ENCODE measurements at regions of chr17 and their contacts with region 1.

Region 1: DNA sequence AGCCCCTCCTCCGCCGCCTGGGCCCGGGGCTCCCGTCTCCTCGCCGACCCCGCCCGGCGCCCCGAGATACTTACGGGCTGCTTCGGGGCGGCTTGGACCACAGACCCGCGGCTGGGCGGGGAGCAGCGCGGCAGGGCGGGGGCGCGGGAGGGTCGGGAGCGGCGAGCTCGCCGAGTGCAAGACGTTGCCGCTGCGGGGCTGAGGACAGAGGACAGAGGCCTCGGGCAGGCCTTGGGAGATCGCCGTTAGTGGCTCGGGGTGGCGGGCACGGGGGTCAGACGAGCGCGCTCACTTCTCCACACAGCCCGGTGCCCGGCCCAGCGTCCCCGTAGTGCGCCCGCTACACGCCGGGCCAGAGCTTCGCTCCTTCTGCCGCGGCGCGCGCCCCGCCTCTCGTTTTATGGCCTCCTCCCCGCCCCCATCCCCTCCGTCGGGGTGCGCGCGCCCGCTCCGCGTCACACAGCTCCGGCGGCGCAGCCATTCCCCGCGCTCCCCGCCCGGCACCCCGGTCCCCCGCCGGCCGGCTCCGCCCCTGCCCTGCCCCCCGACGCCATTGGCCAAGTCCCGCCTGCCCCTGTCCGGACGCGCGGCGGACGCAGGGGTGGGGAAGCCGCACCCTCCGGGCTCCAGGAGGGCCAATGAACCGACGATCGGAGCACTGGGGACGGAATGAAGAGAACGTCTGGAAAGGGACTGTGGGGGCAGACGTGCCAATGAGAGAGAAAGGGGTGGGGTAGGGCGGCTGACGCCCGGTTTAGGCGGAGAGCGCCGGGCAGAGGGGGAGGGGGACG is at the start of gene TOB1:
- DNase-seq: peak; percentile 99
- H3K4me3 ChIP-seq: peak within 1 kb of the TSS; percentile 90 to 100 (median 95)
- H3K27ac ChIP-seq: peak within 1 kb of the TSS; percentile 98 to 100 (median 99)
- H3K4me1 ChIP-seq: peaks cover 3 to 52% (median 34%) of the 10 kb centered on the region in 4 donors
- H3K27me3 ChIP-seq: no peaks in the 10 kb centered on the region
- CTCF ChIP-seq: no peak
- EP300 ChIP-seq: no peak
- POLR2A ChIP-seq: peak; percentile 99
- total RNA-seq, gene TOB1: 69.1 to 88.3 (median 75.5) TPM

Region 2: DNA sequence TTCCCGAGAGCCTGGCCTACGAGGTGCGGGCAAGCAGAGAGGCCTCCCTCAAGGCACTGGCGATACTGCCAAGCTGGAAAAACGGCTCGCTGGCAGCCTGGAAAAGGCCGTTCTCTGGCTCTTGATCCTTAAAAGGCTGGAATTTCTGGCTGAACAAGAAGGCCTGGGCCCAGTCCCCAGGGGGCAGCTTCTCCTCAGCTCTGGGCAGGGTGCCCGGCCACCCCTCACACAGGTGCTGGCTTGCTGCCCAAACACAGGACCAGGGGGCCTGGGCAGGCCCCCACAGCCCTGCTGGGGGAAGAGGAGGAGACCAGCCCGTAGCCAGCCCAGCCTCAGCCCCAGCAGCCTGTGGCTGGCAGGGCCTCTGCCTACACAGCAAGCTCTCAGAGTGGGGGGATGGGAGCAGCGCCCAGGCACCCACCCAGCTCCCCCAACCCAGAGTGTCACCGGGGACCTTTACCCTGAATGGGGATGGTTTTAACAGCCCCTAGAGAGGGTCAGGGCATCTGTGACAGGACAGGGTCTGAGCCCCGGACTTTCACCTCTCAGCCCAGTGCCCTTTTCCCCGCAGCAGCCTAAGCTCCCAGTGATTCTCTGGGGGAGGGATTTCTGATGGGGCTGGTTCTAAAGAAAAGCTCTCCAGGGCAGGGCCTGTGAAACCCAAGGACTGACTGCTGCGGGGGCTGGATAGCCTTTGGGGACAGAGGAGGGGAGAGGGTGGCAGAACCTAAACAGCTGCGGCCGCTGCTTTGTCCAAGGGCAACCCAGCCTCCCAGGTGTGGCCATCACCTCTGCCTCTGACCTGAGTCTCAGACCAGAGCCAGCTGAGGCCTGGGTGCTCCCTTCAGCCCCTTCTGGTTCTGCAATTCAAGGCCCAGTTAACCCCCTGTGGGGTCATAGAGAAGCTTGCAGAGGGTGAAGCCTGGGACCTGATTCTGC is 38.6 kb after region 1 on chr17:
- in situ Hi-C with region 1: no loop called
- intact Hi-C with region 1: loop called (anchors 5 kb)
- DNase-seq: peak; percentile 48
- H3K4me3 ChIP-seq: no peak overlapping the region
- H3K27ac ChIP-seq: peak overlapping the region; percentile 82 to 95 (median 92)
- H3K4me1 ChIP-seq: peaks cover 23 to 34% (median 33%) of the 10 kb centered on the region in 4 donors
- H3K27me3 ChIP-seq: no peaks in the 10 kb centered on the region
- CTCF ChIP-seq: no peak
- EP300 ChIP-seq: no peak
- POLR2A ChIP-seq: peak; percentile 7

Region 3: DNA sequence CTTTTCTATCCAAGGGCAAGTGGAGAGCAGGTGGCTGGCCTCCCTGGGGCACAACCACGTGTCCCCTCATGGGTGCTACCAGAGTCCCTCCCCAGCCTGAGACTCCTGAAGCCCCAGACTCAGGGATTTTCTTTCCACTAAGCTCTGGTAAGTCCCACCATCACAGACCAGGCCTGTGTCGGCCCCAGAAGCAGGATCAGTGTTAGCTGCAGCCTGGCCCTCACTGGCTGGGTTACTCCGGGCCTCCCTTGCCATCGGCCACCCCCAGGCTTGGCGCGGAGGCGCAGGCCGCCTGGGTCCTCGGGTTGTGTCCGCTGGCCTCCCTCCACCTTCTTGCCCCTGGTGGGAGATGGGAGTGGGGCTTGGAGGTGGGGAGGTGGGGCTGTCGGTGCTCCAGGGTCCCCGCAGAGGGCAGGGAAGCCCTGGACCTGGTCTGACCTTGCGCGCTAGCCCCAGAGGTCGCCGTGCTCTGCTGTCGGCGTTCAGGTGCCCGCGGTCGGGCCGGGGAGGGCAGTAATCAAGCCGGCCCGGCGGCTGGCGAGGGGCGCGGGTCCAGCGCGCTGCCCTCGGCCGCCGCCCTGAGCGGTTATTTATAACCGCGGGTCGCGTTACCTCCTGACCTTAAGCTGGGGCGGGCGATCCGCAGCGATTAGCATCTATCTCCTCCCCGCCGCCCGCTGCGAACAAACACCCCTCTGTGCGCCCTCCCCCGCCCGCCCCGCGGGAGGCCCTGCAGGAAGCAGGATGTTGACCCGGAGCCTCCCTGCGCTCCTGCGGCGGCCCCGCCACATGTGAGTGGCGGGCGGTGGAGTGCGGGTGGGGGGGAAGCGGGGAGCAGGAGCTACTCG is 78.1 kb after region 1 on chr17:
- in situ Hi-C with region 1: no loop called
- intact Hi-C with region 1: no loop called
- DNase-seq: peak; percentile 92
- H3K4me3 ChIP-seq: peak overlapping the region; percentile 11 to 61 (median 34)
- H3K27ac ChIP-seq: peak overlapping the region; percentile 89 to 95 (median 92)
- H3K4me1 ChIP-seq: peaks cover 25 to 63% (median 46%) of the 10 kb centered on the region in 4 donors
- H3K27me3 ChIP-seq: no peaks in the 10 kb centered on the region
- CTCF ChIP-seq: peak in 1 of 5 experiments; percentile 42
- EP300 ChIP-seq: no peak
- POLR2A ChIP-seq: peak; percentile 93

Region 4: DNA sequence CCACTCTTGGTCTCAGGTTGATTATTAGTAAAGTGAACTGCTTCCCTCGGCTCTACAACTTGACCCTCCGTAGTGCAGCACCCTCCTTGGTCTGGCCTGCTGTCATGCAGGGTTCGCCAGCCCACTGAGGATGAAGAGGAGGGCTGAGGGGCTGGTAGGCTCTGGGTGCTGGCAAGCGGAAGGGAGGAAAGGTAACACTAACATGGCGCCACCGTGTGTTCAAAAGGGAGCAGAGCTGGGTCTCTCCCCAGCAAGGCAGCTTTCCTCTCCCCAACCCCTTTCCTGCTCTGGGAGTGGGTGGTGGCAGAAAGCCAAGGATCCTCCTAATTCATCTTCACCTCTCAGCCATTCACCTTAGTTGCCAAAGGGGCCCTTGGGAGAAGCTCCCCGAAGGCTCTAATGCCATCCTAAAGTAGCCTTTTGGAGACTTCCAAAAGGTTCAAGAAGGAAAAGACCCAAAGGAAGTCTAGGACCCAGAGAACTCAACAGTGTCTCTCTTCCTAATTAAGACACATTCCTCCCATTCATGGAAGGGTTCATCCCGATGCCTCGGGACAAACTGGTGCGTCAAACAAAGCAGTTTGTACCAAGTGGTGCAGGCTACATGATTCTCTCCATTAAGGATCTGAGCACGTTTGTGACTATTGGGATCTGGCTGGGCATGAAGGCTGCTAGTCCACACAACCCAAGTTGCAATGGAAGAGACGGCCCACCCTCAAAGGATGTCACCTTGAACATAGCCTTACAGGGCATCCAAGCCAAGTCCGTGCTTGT is 90.8 kb after region 1 on chr17:
- in situ Hi-C with region 1: no loop called
- intact Hi-C with region 1: loop called (anchors 2 kb)
- DNase-seq: peak; percentile 68
- H3K4me3 ChIP-seq: no peak overlapping the region
- H3K27ac ChIP-seq: peak overlapping the region in 3 of 4 donors; percentile 45 to 70 (median 57)
- H3K4me1 ChIP-seq: peaks cover 7 to 28% (median 25%) of the 10 kb centered on the region in 4 donors
- H3K27me3 ChIP-seq: no peaks in the 10 kb centered on the region
- CTCF ChIP-seq: peak; percentile 60 to 83 (median 73)
- EP300 ChIP-seq: no peak
- POLR2A ChIP-seq: no peak

Region 5: DNA sequence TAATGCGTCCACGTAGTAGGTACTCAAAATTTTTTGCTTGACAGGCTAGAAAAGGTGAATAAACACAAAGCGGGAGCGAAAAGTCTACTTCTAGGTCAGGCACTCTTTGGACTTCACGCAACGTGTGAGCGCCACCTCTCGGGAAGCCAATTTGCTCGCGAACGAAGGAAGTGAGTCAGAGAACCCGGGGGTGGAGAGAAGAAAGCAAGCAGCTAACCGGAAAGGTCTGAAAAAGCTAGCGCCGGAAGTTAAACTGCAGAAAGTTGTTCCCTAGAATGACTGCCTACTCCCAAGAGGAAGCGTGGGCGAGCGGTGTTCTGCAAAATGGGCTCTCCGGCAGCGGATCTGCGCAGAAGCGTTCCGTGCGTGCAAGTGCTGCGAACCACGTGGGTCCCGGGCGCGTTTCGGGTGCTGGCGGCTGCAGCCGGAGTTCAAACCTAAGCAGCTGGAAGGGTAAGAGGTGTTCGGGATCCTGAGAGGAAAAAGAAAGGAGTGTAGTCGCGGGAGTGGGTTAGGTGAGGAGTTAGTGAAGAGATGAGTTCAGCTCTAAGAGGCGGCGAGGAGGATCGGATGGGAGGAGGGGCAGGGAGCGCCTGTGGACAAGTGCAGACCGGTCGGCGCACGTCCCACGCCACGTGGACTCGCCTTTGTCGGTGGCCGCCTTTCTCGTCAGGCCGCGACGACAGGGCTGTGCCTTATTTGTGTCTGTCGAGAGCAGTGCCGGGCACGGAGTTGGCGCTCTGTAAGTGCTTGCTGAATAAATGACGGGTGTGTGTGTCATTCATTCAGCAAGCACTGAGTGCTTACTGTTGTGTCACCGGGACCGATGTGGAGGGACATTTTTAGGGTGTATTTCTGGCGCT is 287.3 kb after region 1 on chr17 and contains the start of gene NME1:
- in situ Hi-C with region 1: loop called in 2 of 4 experiments (anchors 25 kb)
- intact Hi-C with region 1: no loop called
- DNase-seq: peak; percentile 96
- H3K4me3 ChIP-seq: peak within 1 kb of the TSS; percentile 27 to 63 (median 42)
- H3K27ac ChIP-seq: peak within 1 kb of the TSS; percentile 85 to 91 (median 88)
- H3K4me1 ChIP-seq: peaks cover 9 to 24% (median 22%) of the 10 kb centered on the region in 4 donors
- H3K27me3 ChIP-seq: no peaks in the 10 kb centered on the region
- CTCF ChIP-seq: peak; percentile 64 to 82 (median 74)
- EP300 ChIP-seq: no peak
- POLR2A ChIP-seq: peak; percentile 50
- total RNA-seq, gene NME1: 8.7 to 50.4 (median 20.2) TPM

Region 6: GRCh38 chr17:51764387-51764972 is 898.3 kb after region 1 on chr17:
- in situ Hi-C with region 1: no loop called
- intact Hi-C with region 1: no loop called
- DNase-seq: peak; percentile 50
- H3K4me3 ChIP-seq: no peak overlapping the region
- H3K27ac ChIP-seq: no peak overlapping the region
- H3K4me1 ChIP-seq: peaks cover 0 to under 1% (median 0%) of the 10 kb centered on the region in 4 donors
- H3K27me3 ChIP-seq: no peaks in the 10 kb centered on the region
- CTCF ChIP-seq: peak; percentile 63 to 72 (median 71)
- EP300 ChIP-seq: no peak
- POLR2A ChIP-seq: no peak

Measured in transverse colon (tissue), 4 donors.